ENCODE measurements at regions of chr3 and their contacts with region 1.

Region 1: DNA sequence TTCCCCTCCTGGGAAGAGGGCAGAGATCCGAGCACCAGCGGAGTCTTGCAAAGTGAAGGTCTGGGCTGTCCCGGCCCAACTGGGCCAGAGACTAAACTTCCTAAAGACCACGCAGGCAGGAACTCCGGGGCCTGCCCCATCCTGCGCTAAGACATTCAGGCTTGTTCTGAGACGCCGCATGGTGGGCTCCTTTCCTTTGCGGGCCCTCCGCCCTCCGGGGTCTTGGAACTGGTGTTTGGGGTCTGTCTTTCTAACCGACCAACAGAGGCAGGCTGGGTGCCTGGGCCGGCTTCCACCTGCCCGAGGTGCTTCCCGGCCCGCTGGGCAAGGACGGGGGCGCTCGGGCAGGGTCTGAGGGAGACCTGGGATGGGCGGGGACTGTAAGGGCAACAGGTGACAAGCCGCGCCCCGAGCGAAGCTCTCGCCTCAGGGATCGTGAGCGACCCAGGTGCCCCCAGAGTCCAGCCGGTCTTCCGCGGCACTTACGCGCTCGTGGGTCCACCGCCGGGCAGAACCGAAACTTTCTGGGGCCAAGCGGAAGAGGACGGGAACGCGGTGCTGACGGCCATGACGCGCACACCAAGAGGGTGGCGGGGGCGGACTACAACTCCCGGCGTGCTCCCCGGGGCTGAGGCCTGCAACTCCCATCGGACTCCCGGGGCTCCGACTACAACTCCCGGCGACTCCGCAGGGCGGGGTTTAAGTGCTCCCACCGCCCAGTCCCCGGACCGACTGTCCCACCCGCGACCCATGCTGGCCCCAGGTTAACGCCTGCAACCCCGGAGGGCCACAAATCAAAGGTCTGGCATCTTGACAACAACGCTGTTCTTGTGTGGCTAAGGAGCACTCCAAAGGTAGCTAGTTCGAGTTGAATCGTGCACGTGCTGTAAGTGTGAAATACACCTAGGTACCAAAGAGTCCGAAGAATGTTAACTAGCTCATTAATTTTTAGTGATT is at the start of gene FYCO1:
- DNase-seq: peak; percentile 91
- H3K4me3 Mint-ChIP-seq: peak within 1 kb of the TSS; percentile 84
- H3K27ac Mint-ChIP-seq: peak within 1 kb of the TSS; percentile 93
- H3K4me1 Mint-ChIP-seq: peaks cover 46% of the 10 kb centered on the region
- H3K27me3 Mint-ChIP-seq: peaks cover 8% of the 10 kb centered on the region
- total RNA-seq, gene FYCO1: 21.7 to 22.6 TPM

Region 2: GRCh38 chr3:45938864-45939263 is 56.6 kb before region 1 on chr3:
- CTCF ChIA-PET with region 1: interaction called, 4 read pairs
- POLR2A ChIA-PET with region 1: interaction called, 48 read pairs
- DNase-seq: peak; percentile 89
- H3K4me3 Mint-ChIP-seq: no peak overlapping the region
- H3K27ac Mint-ChIP-seq: peak overlapping the region; percentile 2
- H3K4me1 Mint-ChIP-seq: peaks cover 52% of the 10 kb centered on the region
- H3K27me3 Mint-ChIP-seq: no peaks in the 10 kb centered on the region

Region 3: GRCh38 chr3:45958321-45958791 is 37.2 kb before region 1 on chr3:
- CTCF ChIA-PET with region 1: no interaction called
- POLR2A ChIA-PET with region 1: interaction called, 119 read pairs
- DNase-seq: no peak
- H3K4me3 Mint-ChIP-seq: no peak overlapping the region
- H3K27ac Mint-ChIP-seq: no peak overlapping the region
- H3K4me1 Mint-ChIP-seq: peaks cover 47% of the 10 kb centered on the region
- H3K27me3 Mint-ChIP-seq: no peaks in the 10 kb centered on the region

Region 4: DNA sequence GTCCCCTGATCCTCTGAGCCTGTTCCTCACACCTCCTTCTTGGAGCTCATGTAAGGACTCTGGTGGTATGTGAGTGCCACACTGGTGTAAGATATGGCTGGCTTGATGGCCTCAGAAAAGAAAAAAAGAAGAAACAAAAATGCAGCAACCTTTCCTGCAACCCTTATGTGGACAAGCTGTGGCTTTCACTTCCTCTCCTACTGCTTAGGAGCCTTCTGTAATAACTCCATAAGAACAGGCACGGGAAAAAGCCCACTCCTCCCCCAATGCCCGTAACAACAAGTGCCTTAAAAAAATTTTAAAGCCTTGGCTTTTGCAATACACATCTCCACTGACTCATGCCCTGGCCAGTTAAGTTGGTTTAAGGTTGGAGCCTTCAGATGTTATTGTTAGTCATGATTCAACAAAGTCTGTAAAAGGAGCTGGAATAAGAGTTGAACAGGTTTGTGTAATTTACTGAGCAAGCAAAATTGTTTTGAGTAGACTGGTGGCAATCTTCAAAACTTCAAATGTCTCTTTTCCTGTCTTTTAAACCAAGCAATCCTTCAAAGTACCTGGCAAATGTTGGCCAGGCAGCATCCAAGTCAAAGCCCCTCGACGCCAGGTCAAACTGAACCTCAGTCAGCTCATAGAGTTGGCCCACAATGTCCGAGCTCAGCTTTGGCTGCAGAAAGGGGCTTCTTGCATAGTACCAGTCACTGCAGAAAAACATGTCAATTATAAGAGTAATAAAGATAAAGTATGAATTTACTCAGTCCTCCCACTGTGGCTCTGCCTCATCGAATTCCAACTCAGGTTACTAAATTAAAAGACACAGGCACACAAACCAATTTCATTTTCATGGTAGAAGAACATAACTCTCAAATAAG is 22.7 kb before region 1 on chr3:
- CTCF ChIA-PET with region 1: interaction called, 3 read pairs
- POLR2A ChIA-PET with region 1: interaction called, 177 read pairs
- DNase-seq: no peak
- H3K4me3 Mint-ChIP-seq: no peak overlapping the region
- H3K27ac Mint-ChIP-seq: peak overlapping the region; percentile 72
- H3K4me1 Mint-ChIP-seq: peaks cover 83% of the 10 kb centered on the region
- H3K27me3 Mint-ChIP-seq: no peaks in the 10 kb centered on the region

Region 5: DNA sequence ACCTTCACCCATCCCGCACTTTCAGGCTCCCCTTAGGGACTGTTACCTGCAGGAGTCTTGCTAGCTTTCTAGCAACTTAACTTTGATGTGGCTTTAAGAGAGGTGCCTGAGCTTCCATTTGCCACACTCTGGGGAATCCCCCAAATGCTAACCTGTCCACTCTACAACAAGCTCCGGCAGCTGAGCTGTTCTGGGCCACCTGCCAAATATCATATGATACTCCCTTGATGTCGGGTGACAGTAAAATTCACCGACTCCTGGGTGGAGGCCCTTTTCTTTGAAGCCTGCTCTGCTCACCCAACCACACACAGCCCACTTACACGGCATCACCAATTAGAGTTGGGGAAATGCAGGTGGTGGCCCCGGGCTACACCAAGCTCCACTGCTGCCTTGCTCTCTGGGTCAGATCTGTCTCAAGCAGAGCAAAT is 69.8 kb after region 1 on chr3:
- CTCF ChIA-PET with region 1: interaction called, 3 read pairs
- POLR2A ChIA-PET with region 1: interaction called, 18 read pairs
- DNase-seq: peak; percentile 52
- H3K4me3 Mint-ChIP-seq: no peak overlapping the region
- H3K27ac Mint-ChIP-seq: no peak overlapping the region
- H3K4me1 Mint-ChIP-seq: peaks cover 49% of the 10 kb centered on the region
- H3K27me3 Mint-ChIP-seq: peaks cover 33% of the 10 kb centered on the region

Measured in activated CD4-positive, alpha-beta memory T cell treated with anti-CD3 and anti-CD28 coated beads, Interleukin-2, amount 10 ng/mL, durations not matched to agents 7 days and 5 days (primary cell).